Activated B cell treated with CpG ODN at 0.5 μM for 24 hours (primary cell): ENCODE measurements at regions of chr7 and their contacts with region 1.

Region 1: DNA sequence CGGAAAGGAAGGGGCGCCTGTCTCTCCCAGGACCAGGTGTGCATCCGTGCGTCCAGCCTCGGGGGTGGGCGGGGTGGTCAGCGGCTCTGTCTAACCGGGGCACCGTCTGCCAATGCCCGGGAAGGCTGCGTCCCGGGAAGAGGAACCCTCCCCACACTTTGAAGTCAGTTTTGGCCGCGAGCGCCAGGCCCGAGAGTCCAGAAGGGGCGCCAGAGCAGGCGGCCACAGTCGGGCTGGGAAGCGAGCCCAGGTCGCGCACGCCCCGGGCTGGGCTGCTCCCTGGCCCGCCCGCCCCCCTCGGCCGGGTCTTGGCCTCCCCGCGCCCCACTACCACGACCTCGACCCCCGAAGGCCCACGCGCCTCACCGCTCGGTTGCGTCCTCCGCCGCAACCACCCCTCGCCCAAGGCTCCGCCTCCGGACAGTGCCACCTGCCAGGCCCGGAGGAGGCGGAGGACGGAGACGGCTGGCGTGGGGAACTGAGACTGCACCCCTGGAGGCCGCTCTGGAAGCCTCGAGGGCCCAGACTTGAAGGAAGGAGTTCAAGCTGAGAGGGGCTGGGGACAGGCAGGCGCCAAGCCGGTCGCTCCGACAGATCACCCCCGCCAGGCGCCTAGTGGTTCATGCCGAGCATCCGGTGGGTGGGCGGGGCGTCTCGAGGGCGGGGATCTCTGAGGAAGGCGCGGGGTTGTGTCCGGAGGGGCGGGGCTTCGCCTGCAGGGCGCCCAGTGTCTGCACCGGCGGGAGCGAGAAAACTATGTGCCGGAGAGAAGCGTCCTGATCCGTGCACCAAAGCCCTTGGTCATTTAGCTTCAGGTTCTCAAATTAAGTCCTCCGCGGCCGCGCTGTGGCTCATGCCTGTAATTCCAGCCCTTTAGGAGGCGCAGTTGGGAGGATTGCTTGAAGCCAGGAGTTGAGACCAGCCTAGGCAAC is at the start of gene BRAT1:
- DNase-seq: peak; percentile 89
- ATAC-seq: peak; percentile 86
- H3K4me3 Mint-ChIP-seq: peak within 1 kb of the TSS; percentile 87
- H3K27ac Mint-ChIP-seq: peak within 1 kb of the TSS; percentile 92
- H3K4me1 Mint-ChIP-seq: peaks cover 45% of the 10 kb centered on the region
- H3K27me3 Mint-ChIP-seq: no peaks in the 10 kb centered on the region
- CTCF ChIP-seq: no peak
- total RNA-seq, gene BRAT1: 29.6 and 31.7 TPM in 2 replicates

Region 2: DNA sequence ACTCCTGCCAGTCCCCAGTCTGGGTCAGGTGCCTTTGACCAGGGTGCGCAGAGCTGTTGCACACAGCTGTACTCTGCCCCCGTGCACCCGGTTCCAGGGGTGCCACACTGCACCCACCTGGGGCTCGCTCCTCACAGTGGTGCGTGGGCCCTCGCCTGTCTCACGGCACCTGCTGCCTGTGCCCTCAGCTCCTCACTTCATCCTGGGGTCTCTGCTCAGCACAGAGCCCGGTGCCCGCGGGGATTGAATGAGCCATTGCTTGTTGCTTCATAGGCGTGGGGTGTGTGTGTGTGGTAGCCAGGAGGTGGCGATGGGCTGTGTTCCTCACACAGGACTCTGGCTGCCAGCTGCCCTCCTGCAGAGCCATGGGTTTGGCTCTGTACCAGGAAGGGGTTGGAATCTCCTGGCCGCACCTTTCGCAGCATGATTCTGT is 182.2 kb before region 1 on chr7:
- CTCF ChIA-PET with region 1: no interaction called
- POLR2A ChIA-PET with region 1: no interaction called
- intact Hi-C with region 1: no loop called
- DNase-seq: no peak
- ATAC-seq: no peak
- H3K4me3 Mint-ChIP-seq: no peak overlapping the region
- H3K27ac Mint-ChIP-seq: no peak overlapping the region
- H3K4me1 Mint-ChIP-seq: peaks cover 2% of the 10 kb centered on the region
- H3K27me3 Mint-ChIP-seq: no peaks in the 10 kb centered on the region
- CTCF ChIP-seq: no peak

Region 3: GRCh38 chr7:2519119-2519930 is 36.1 kb before region 1 on chr7 and contains the start of gene LFNG:
- CTCF ChIA-PET with region 1: interaction called, 3 read pairs
- POLR2A ChIA-PET with region 1: interaction called, 21 read pairs
- intact Hi-C with region 1: loop called (anchors 1 kb)
- DNase-seq: peak; percentile 94
- ATAC-seq: peak; percentile 75
- H3K4me3 Mint-ChIP-seq: peak within 1 kb of the TSS; percentile 96
- H3K27ac Mint-ChIP-seq: peak within 1 kb of the TSS; percentile 87
- H3K4me1 Mint-ChIP-seq: peaks cover 49% of the 10 kb centered on the region
- H3K27me3 Mint-ChIP-seq: no peaks in the 10 kb centered on the region
- CTCF ChIP-seq: no peak
- total RNA-seq, gene LFNG: 87.4 and 95.8 TPM in 2 replicates

Region 4: GRCh38 chr7:2585446-2585845 is 30.1 kb after region 1 on chr7:
- CTCF ChIA-PET with region 1: no interaction called
- POLR2A ChIA-PET with region 1: no interaction called
- intact Hi-C with region 1: no loop called
- DNase-seq: no peak
- ATAC-seq: no peak
- H3K4me3 Mint-ChIP-seq: no peak overlapping the region
- H3K27ac Mint-ChIP-seq: no peak overlapping the region
- H3K4me1 Mint-ChIP-seq: peaks cover 3% of the 10 kb centered on the region
- H3K27me3 Mint-ChIP-seq: no peaks in the 10 kb centered on the region
- CTCF ChIP-seq: no peak